ENCODE measurements at regions of chr9 and their contacts with region 1.

Region 1: DNA sequence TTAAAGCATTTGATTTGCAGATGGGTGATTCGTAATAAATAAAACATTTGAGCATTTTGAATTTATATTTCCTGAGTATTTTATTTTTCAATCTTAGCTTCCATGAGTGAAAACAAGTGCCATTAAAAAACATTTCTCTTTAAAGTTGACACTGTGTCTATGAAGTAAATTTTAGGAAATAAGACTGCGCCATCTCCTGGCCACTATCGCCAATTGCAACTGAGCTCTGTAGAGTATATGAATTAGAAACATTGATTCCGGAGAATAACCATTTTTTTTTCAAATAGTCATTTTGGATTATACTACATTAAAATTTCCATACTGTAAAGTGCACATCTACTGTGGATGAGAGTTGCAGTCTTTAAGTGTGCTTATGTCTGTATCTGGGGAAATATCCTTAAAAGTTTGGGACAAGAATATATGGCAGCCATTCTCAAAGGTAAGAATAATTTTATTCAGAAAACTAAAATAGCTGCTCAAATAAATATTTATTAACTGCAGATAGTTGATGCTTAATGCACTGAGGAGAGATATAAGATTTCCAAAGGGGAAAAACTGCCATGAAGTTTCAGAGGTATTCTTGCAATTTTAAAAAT is 5.9 kb downstream of the DMRTA1 start:
- DNase-seq: peak in 2 of 3 donors; percentile 43 to 70
- ATAC-seq: peak; percentile 56
- H3K4me3 ChIP-seq: no peak overlapping the region
- H3K4me1 ChIP-seq: no peaks in the 10 kb centered on the region
- CTCF ChIP-seq: peak; percentile 32

Region 2: DNA sequence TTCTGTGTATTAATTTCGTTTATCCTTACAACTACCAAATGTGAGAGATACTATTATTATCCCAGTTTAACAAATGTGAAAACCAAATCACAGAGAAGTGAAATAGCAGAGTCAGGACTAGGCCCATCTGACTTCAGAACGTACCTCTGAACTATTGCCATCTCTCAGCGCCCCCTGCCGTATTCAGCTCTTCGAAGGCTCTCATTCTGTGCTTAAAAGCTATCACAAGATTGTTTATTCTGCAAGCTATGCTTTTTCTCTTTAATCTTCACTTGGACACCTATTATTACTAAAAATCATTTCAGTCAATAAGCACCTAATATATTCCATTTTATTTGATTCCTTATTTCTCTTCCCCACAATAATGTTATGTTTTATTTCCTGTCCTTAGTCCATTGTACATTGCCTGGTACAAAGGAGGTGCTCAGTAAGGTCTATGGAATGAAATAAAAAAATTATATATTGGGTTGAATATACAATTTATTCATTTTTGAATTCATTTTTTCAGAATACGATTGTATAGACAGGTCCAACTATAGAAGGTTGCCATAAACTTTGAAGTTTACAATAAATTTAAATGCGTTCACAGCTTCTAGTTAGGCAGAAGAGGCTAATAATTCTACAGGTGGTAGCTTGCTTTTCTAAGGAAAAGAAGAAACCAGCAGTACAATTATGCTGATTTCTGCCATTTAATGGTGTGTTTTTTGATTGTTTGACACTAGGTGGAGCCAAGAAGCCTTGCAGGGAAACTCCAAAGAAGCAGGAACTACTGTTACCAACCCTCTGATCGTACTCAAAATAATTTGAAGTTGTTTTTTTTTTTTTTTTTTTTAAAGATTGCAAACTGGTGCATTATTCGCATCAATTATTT is 208.1 kb before region 1 on chr9:
- intact Hi-C with region 1: loop called in 1 of 2 experiments (anchors 5 kb)
- DNase-seq: peak in 2 of 3 donors; percentile 34 to 68
- ATAC-seq: peak; percentile 68
- H3K4me3 ChIP-seq: no peak overlapping the region
- H3K4me1 ChIP-seq: no peaks in the 10 kb centered on the region
- CTCF ChIP-seq: no peak

Region 3: DNA sequence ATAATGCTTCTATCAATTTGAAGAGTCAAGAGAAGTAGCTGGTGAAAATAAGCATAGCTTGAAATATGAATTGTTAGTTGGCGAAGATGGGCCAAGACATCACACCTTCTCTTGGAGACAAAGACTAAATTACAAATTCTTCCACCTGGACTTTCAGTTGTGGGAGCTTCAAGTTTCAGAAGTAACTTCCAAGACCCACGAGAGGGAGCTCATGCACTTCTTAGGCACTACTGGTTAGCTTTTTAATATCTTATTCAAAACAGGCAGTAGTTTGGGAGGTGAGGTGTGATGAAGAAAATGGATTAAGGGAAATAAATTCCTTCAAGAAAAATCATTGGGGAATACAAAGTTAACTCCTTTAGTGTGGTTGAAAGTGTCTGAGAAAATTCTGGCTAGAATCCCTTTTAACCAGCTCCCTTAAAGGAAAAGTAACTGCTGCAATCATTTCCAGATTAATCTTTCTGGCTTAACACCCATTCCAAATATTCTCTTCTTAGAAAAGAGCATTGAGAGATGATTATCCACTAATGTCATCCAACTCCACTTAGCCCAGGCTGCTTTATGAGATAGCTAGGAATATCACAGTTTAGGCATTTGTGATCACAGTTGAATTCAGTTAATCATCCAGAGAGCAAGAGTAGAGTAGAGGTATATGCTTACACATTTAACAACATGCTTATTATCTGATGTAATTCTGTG is 145.4 kb before region 1 on chr9:
- intact Hi-C with region 1: loop called in 1 of 2 experiments (anchors 5 kb)
- DNase-seq: peak in 1 of 3 donors; percentile 29
- ATAC-seq: no peak
- H3K4me3 ChIP-seq: no peak overlapping the region
- H3K4me1 ChIP-seq: no peaks in the 10 kb centered on the region
- CTCF ChIP-seq: no peak